ENCODE measurements at regions of chr19 and their contacts with region 1.

Region 1: DNA sequence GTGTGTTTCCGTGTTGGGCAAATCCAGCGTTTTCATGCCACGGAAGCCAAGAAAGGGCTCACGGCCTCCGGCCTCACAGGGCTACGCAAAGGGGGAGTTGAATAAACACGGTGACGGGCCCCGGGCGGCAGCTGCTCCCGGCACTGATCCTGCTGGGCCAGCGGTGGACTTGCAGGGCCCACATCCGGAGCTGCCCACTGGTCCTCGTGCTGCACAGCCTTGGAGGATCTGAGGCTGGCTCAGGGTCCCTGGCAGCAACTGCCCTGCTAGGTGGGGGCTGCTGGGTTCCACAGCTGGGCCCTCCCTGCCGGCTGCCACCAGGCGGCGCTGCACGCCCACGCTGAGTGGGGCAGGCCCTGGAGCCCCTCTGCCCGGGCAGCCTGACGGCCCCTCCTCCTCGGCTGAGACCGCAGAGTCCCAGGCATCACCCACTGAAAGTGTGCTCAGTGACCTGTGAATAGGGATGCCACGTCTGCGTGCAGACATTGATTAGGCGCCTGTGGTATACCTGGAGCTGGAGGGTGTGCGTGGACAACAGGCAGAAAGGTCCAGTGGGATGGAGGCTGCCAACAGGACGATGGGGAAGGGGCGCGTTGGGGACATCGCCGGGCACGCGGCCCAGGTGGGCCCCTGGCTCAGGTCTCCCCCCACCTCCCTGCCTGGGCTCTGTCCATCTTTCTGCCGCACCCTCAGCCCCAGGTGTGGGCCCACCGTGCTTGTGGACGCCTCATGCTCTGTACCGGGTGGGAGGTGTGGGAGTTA is 5.3 kb upstream of the HCN2 start:
- DNase-seq: peak in 2 of 3 donors; percentile 38 to 51
- H3K4me3 ChIP-seq: no peak overlapping the region
- H3K4me3 Mint-ChIP-seq: no peak overlapping the region
- H3K27ac ChIP-seq: no peak overlapping the region
- H3K27ac Mint-ChIP-seq: no peak overlapping the region
- H3K4me1 ChIP-seq: no peaks in the 10 kb centered on the region
- H3K4me1 Mint-ChIP-seq: peaks cover 8% of the 10 kb centered on the region
- H3K27me3 ChIP-seq: peaks cover 8 to 33% of the 10 kb centered on the region in 2 donors
- H3K27me3 Mint-ChIP-seq: peaks cover 32 to 41% (median 37%) of the 10 kb centered on the region in 3 donors
- CTCF ChIP-seq: peak; percentile 97

Region 2: GRCh38 chr19:518603-519231 is 65.7 kb before region 1 on chr19:
- intact Hi-C with region 1: no loop called
- DNase-seq: no peak
- H3K4me3 ChIP-seq: no peak overlapping the region
- H3K4me3 Mint-ChIP-seq: no peak overlapping the region
- H3K27ac ChIP-seq: no peak overlapping the region
- H3K27ac Mint-ChIP-seq: no peak overlapping the region
- H3K4me1 ChIP-seq: no peaks in the 10 kb centered on the region
- H3K4me1 Mint-ChIP-seq: no peaks in the 10 kb centered on the region
- H3K27me3 ChIP-seq: peaks cover 0 to 3% of the 10 kb centered on the region in 2 donors
- H3K27me3 Mint-ChIP-seq: peaks cover 8 to 31% (median 28%) of the 10 kb centered on the region in 3 donors
- CTCF ChIP-seq: no peak

Region 3: GRCh38 chr19:604355-604754 is 19.9 kb after region 1 on chr19:
- intact Hi-C with region 1: no loop called
- DNase-seq: peak in 2 of 3 donors; percentile 12 to 21
- H3K4me3 ChIP-seq: no peak overlapping the region
- H3K4me3 Mint-ChIP-seq: no peak overlapping the region
- H3K27ac ChIP-seq: no peak overlapping the region
- H3K27ac Mint-ChIP-seq: no peak overlapping the region
- H3K4me1 ChIP-seq: peaks cover 12 to 14% of the 10 kb centered on the region in 2 donors
- H3K4me1 Mint-ChIP-seq: peaks cover 7% of the 10 kb centered on the region
- H3K27me3 ChIP-seq: no peaks in the 10 kb centered on the region
- H3K27me3 Mint-ChIP-seq: peaks cover 4 to 12% (median 10%) of the 10 kb centered on the region in 3 donors
- CTCF ChIP-seq: no peak

Region 4: DNA sequence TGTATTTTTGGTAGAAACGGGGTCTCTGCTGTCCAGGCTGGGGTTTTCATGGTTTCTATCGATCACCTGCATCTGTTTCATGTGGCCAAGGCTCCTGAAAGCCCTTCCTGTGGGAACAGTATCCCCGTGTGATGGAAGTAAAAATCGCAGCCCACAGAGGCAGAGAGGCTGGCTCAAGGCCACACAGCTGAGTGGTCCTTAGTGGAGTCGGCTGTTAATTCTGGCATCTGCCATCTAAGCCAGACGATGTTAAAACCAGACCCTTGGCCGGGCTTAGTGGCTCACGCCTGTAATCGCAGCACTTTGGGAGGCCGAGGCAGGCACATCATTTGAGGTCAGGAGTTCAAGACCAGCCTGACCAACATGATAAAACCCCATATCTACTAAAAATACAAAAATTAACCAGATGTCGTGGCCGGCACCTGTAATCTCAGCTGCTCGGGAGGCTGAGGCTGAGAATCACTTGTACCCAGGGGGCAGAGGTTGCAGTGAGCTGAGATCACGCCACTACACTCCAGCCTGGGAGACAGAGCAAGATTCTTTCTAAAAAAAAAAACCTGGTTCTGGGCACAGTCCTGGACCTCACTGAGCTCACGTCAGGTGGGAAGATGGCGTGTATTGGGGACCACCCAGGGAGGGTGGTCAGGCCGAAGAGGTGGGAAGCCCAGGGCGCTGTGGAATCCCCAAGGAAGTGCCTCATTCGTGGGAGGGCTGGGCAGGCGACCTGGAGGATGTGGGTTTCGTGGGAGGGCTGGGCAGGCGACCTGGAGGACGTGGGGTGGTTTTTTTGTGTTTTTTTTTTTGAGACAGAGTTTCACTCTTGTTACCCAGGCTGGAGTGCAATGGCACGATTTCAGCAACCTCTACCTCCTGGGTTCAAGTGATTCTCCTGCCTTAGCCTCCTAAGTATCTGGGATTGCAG is 148.0 kb after region 1 on chr19:
- intact Hi-C with region 1: loop called (anchors 2 to 5 kb)
- DNase-seq: no peak
- H3K4me3 ChIP-seq: no peak overlapping the region
- H3K4me3 Mint-ChIP-seq: no peak overlapping the region
- H3K27ac ChIP-seq: no peak overlapping the region
- H3K27ac Mint-ChIP-seq: peak overlapping the region in 1 of 7 donors; percentile 53
- H3K4me1 ChIP-seq: no peaks in the 10 kb centered on the region
- H3K4me1 Mint-ChIP-seq: peaks cover 6% of the 10 kb centered on the region
- H3K27me3 ChIP-seq: no peaks in the 10 kb centered on the region
- H3K27me3 Mint-ChIP-seq: peaks cover 1 to 12% (median 4%) of the 10 kb centered on the region in 3 donors
- CTCF ChIP-seq: no peak

Measured in CD14-positive monocyte (primary cell).